Activated CD4-positive, alpha-beta memory T cell treated with anti-CD3 and anti-CD28 coated beads for 36 hours (primary cell): ENCODE measurements at regions of chr3 and their contacts with region 1.

Region 1: DNA sequence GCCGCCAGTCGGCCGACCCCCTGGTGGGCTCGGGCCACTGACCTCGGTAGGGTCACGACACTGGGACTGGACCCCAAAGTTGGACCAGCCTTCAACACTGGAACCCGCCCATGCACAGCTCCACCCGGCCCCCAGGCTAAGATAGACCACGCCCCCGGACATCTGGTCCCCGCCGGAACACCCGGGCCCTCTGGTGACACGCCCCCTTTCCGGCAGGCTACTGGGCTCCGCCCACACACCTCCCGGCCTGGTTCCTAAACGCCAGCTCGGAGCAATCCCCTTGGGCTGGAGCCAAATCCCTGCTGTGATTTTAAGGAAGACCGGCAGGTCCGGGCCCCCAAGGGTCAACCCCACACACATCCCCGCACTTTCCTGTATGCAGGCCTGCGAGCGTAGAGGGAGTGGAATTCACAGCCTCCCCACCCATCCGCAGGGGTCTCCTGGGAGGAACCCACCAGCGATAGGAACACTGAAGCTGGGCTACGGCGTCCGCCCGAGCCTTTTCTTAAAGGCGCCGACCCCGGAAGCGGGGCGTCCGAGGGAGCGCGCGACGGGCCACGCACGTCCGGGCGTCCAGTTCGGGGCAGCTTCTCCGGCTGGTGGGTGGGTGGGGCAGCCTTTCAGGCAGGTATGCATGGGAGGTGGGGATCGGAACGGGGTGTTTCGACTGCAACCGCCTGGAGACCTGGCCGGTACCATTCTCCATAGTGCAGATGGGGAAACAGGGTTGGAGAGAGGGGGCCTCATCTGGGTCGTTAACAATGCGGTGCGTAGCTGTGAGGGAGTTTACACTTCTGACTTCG is at the start of gene HEMK1:
- DNase-seq: peak; percentile 98
- H3K4me3 Mint-ChIP-seq: peak within 1 kb of the TSS; percentile 99
- H3K27ac Mint-ChIP-seq: peak within 1 kb of the TSS; percentile 95
- H3K4me1 Mint-ChIP-seq: peaks cover 56% of the 10 kb centered on the region
- H3K27me3 Mint-ChIP-seq: no peaks in the 10 kb centered on the region
- total RNA-seq, gene HEMK1: 78.7 to 82.6 TPM

Region 2: DNA sequence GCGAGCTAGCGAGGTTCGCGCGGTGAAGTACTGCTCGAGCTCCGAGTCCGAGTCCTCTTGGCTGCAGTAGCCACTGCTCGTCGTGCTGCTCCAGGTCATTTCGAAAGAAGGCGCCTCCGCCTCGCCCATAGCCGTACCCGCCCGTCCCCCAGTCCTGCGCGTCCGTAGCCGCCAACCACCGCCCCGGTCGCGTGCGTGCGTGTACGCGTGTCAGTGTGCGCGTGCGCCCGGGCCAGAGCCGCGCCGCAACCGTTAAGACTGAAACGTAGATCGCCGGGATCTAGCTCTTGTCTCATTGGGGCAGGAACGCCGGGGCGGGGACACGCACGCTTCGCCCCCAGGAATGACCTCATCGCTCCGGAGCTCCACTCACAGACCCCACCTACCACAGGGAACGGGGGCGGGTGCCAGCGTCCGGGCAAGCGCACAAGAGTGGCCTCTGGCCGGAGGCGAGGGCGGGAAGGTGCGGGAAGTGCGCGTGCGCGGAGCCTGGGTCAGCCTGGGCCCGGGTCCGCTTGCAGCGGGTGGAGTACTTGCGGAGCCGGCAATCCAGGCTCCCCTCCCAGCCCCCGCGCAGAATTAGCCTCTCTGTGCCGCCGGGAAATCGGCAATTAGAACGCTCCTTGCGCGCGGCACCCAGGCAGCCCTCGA is 231.8 kb before region 1 on chr3:
- CTCF ChIA-PET with region 1: interaction called, 6 read pairs
- POLR2A ChIA-PET with region 1: interaction called, 26 read pairs
- intact Hi-C with region 1: no loop called
- DNase-seq: peak; percentile 99
- H3K4me3 Mint-ChIP-seq: peak overlapping the region; percentile 97
- H3K27ac Mint-ChIP-seq: peak overlapping the region; percentile 92
- H3K4me1 Mint-ChIP-seq: peaks cover 57% of the 10 kb centered on the region
- H3K27me3 Mint-ChIP-seq: no peaks in the 10 kb centered on the region

Region 3: GRCh38 chr3:50550079-50550741 is 18.9 kb before region 1 on chr3:
- CTCF ChIA-PET with region 1: interaction called, 12 read pairs
- POLR2A ChIA-PET with region 1: no interaction called
- intact Hi-C with region 1: no loop called
- DNase-seq: peak; percentile 79
- H3K4me3 Mint-ChIP-seq: no peak overlapping the region
- H3K27ac Mint-ChIP-seq: no peak overlapping the region
- H3K4me1 Mint-ChIP-seq: no peaks in the 10 kb centered on the region
- H3K27me3 Mint-ChIP-seq: no peaks in the 10 kb centered on the region

Region 4: GRCh38 chr3:50594253-50594785 is 25.2 kb after region 1 on chr3:
- CTCF ChIA-PET with region 1: interaction called, 908 read pairs
- POLR2A ChIA-PET with region 1: interaction called, 1,013 read pairs
- intact Hi-C with region 1: no loop called
- DNase-seq: peak; percentile 40
- H3K4me3 Mint-ChIP-seq: no peak overlapping the region
- H3K27ac Mint-ChIP-seq: peak overlapping the region; percentile 98
- H3K4me1 Mint-ChIP-seq: peaks cover 78% of the 10 kb centered on the region
- H3K27me3 Mint-ChIP-seq: no peaks in the 10 kb centered on the region

Region 5: GRCh38 chr3:50627407-50628051 is 58.4 kb after region 1 on chr3:
- CTCF ChIA-PET with region 1: interaction called, 10 read pairs
- POLR2A ChIA-PET with region 1: no interaction called
- intact Hi-C with region 1: no loop called
- DNase-seq: peak; percentile 59
- H3K4me3 Mint-ChIP-seq: no peak overlapping the region
- H3K27ac Mint-ChIP-seq: peak overlapping the region; percentile 84
- H3K4me1 Mint-ChIP-seq: peaks cover 98% of the 10 kb centered on the region
- H3K27me3 Mint-ChIP-seq: no peaks in the 10 kb centered on the region

Region 6: GRCh38 chr3:50674349-50675178 is 105.4 kb after region 1 on chr3 and contains the start of gene DOCK3:
- CTCF ChIA-PET with region 1: interaction called, 4 read pairs
- POLR2A ChIA-PET with region 1: no interaction called
- intact Hi-C with region 1: loop called (anchors 5 kb)
- DNase-seq: peak; percentile 65
- H3K4me3 Mint-ChIP-seq: peak within 1 kb of the TSS; percentile 68
- H3K27ac Mint-ChIP-seq: peak within 1 kb of the TSS; percentile 28
- H3K4me1 Mint-ChIP-seq: peaks cover 11% of the 10 kb centered on the region
- H3K27me3 Mint-ChIP-seq: peaks cover 25% of the 10 kb centered on the region
- total RNA-seq, gene DOCK3: 2.7 to 2.9 TPM

Region 7: DNA sequence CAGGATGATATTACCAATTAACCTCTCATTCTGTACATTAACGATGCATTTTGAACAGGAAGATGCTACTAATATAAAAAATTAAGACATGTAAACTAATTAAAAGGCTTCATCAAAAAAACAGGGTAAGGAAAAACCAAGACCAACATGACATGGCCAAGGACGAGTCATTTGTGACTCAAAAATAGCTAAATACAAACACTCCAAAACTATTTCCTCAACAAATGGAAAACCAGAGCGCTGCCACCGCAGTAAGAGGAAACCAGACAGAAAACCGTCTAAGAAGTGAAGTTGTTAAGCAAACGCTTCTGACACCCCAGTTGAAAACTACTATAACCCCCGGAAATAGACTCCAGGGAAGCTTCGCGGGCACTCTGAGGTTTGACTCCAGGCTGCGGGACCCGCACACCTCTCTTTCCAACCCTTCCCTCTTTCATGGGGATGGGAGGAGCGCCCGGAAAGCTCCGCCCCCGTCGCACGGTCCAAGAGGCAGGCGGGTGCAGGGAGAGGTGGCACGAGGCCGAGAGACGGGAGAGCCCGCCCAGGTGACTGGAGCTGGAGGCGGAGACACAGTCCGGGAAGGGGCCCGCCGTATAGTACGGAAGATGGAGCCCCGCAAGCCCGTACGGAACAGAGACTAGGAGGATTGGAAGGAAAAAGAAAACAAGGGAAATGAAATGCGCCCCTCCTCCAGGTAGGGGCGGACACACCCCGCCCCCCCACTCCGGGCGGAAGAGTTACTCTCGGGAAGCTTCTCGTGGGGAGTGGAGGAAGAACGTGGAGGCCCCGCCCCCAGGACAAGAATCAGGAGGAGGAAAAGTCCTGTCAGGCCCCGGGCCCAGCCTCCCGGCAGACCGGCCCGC is 930.0 kb after region 1 on chr3:
- CTCF ChIA-PET with region 1: no interaction called
- POLR2A ChIA-PET with region 1: no interaction called
- intact Hi-C with region 1: loop called (anchors 1 kb)
- DNase-seq: peak; percentile 93
- H3K4me3 Mint-ChIP-seq: peak overlapping the region; percentile 82
- H3K27ac Mint-ChIP-seq: peak overlapping the region; percentile 94
- H3K4me1 Mint-ChIP-seq: peaks cover 11% of the 10 kb centered on the region
- H3K27me3 Mint-ChIP-seq: peaks cover 1% of the 10 kb centered on the region